Right ventricle myocardium inferior (tissue), 1 donor: ENCODE measurements at regions of chr5 and their contacts with region 1.

Region 1: DNA sequence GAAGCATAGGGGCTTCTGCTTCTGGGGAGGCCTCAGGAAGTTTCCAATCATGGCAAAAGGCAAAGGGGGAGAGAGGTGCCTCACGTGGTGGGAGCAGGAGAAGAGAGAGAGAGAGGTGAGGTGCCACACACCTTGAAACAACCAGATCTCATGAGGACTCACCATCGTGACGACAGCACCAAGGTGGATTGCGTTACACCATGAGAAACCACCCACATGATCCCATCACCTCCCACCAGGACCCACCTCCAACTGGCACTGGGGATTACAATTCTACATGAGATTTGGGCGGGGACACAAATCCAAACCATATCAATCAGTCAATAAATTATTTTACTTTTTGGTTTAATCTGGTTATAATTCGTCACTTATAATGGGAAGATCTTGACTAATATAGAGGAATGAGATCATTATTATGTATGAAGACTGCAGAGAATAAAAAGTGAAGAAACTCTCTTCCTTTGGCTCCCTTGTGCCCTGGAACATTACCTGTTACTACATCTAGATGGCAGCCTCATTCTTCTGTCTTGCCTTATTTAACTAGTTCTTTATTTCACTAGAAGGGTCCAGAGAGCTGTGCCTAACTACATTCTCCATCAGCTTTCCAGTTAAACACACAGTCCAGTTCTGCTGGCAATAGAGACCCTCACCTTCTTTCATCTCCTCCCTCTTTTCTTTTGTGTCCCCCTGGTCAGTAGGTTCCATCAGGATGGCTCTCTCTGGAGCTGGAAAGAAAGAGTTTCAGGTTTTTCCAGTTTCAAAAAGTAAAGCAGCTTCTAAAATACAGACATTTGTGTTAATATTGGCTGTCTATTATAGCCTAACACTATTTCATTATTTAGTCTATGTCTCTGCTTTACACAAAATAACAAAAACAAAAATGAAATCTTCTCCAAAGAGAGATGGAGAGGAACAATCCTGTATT is 21.7 kb upstream of the SPINK7 start:
- DNase-seq: no peak
- ATAC-seq: no peak

Region 2: GRCh38 chr5:148364343-148364742 is 73.8 kb after region 1 on chr5:
- intact Hi-C with region 1: loop called (anchors 10 kb)
- DNase-seq: no peak
- ATAC-seq: no peak